Activated T-helper 1 cell treated with anti-CD3 and anti-CD28 coated beads, Interleukin-12 subunit alpha, Interleukin-12 subunit beta, Interleukin-2, Interleukin-4 antibody, amounts not matched to agents 30 ng/mL and 10 ng/mL and 1 ng/mL, durations not matched to agents 14 hours and 24 hours and 36 hours (primary cell): ENCODE measurements at regions of chr13 and their contacts with region 1.

Region 1: GRCh38 chr13:101639711-101640110 is 187.2 kb downstream of the ITGBL1 start:
- DNase-seq: no peak
- H3K4me3 Mint-ChIP-seq: no peak overlapping the region
- H3K27ac Mint-ChIP-seq: no peak overlapping the region
- H3K4me1 Mint-ChIP-seq: no peaks in the 10 kb centered on the region
- H3K27me3 Mint-ChIP-seq: peaks cover 5% of the 10 kb centered on the region

Region 2: DNA sequence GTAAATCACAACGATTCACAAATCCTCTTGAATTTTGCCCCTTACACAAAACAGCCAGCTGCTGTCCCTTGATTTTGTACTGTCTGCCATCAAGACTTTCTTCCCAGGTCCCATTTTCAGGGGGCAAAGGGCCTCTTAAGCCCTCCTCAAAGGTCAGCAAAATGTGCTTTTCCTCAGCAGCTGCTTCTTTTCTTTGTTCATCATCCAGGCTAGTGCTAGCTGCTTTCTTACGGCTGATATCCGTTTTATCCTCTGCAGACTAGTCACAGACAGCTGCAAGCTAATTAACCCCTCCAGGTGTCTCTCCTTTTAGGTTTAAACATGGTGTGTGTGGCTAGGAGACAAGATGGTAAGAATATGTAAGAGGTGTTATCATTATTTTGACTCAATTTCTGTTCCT is 314.3 kb before region 1 on chr13:
- intact Hi-C with region 1: no loop called
- DNase-seq: no peak
- H3K4me3 Mint-ChIP-seq: no peak overlapping the region
- H3K27ac Mint-ChIP-seq: no peak overlapping the region
- H3K4me1 Mint-ChIP-seq: no peaks in the 10 kb centered on the region
- H3K27me3 Mint-ChIP-seq: no peaks in the 10 kb centered on the region

Region 3: GRCh38 chr13:101695870-101696516 is 56.3 kb after region 1 on chr13:
- intact Hi-C with region 1: loop called (anchors 10 kb)
- DNase-seq: no peak
- H3K4me3 Mint-ChIP-seq: no peak overlapping the region
- H3K27ac Mint-ChIP-seq: no peak overlapping the region
- H3K4me1 Mint-ChIP-seq: no peaks in the 10 kb centered on the region
- H3K27me3 Mint-ChIP-seq: peaks cover 4% of the 10 kb centered on the region